Dorsolateral prefrontal cortex (tissue), 120 donors: ENCODE measurements at regions of chr11 and their contacts with region 1.

Region 1: GRCh38 chr11:11584446-11584810 is 37.4 kb downstream of the GALNT18 start:
- DNase-seq: no peak
- H3K4me3 ChIP-seq: no peak overlapping the region
- H3K27ac ChIP-seq: no peak overlapping the region
- H3K27me3 ChIP-seq: no peaks in the 10 kb centered on the region
- CTCF ChIP-seq: no peak

Region 2: DNA sequence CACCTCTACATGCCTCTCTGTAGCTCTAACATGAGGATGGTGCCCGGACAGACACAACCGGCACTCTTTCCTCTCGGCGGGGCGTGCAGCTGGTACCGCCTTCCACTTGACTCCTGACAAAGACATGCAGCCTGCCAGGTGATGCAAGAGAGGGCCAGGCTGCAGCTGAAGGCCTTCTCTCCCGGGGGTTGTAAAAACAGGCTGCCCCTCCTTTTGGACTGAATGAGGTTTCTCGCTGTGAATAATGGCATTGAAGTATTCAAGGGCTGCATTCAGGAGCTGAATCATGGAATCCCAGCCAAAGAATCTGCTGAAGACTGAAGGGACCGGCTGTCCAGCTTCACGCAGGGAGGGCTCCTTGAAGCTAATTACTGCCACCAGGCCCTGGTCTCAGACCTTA is 73.5 kb before region 1 on chr11:
- intact Hi-C with region 1: loop called in 1 of 2 experiments (anchors 1 kb)
- DNase-seq: peak in 7 of 10 donors; percentile 27 to 71 (median 53)
- H3K4me3 ChIP-seq: no peak overlapping the region
- H3K27ac ChIP-seq: peak overlapping the region in 43 of 59 donors; percentile 1 to 75 (median 46)
- H3K27me3 ChIP-seq: no peaks in the 10 kb centered on the region
- CTCF ChIP-seq: peak in 3 of 56 donors; percentile 9 to 22 (median 10)